Pancreas (tissue), 10 donors: ENCODE measurements at regions of chr3 and their contacts with region 1.

Region 1: GRCh38 chr3:149114458-149114857 is 15.0 kb upstream of the HPS3 start:
- DNase-seq: no peak
- ATAC-seq: no peak
- H3K4me3 ChIP-seq: no peak overlapping the region
- H3K27ac ChIP-seq: no peak overlapping the region
- H3K4me1 ChIP-seq: no peaks in the 10 kb centered on the region
- H3K27me3 ChIP-seq: no peaks in the 10 kb centered on the region
- CTCF ChIP-seq: no peak

Region 2: DNA sequence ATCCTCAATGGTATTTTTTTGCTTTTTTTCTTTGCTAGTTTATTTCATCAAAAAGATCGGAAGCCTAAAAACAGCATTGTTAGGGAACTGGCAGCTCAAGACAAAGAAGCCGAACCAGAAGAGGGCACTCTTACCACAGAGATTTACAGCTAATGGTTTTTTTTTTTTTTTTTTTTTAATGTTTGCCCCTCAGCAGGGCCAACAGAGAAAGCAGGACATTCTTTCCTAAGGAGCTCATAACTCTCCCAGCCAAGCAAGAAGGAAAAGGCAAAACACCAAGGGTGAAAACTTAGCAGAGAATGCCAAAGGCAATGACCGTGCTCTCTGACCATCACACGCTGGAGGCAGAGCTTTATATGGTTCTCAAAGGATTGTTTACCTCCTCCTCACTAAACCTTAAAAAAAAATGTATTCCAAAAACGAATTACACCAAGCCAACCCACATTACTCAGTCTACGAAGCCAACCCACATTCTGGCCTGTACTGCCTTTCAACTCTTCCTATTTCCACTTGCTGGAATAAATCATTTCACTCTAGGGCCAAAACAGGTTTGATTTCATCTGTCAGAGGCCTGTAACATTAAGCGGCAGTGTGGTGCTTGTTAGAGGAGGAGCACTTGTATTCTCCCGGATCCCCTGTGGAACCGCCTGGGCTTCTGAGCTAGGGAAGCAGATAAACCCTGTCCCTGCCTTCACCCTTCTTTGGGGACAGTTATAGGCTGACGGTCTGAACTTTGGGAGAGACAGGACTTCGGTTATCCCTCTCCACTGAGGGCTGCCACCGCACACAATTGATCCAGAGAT is 158.7 kb before region 1 on chr3:
- intact Hi-C with region 1: loop called in 1 of 3 experiments (anchors 10 kb)
- DNase-seq: peak in 3 of 6 donors; percentile 43 to 59 (median 52)
- ATAC-seq: peak; percentile 60 to 87 (median 82)
- H3K4me3 ChIP-seq: no peak overlapping the region
- H3K27ac ChIP-seq: no peak overlapping the region
- H3K4me1 ChIP-seq: peaks cover 0 to 6% (median 0%) of the 10 kb centered on the region in 3 donors
- H3K27me3 ChIP-seq: no peaks in the 10 kb centered on the region
- CTCF ChIP-seq: peak in 2 of 4 donors; percentile 26 to 31

Region 3: GRCh38 chr3:149163066-149163465 is 48.6 kb after region 1 on chr3:
- intact Hi-C with region 1: no loop called
- DNase-seq: no peak
- ATAC-seq: no peak
- H3K4me3 ChIP-seq: no peak overlapping the region
- H3K27ac ChIP-seq: no peak overlapping the region
- H3K4me1 ChIP-seq: no peaks in the 10 kb centered on the region
- H3K27me3 ChIP-seq: no peaks in the 10 kb centered on the region
- CTCF ChIP-seq: no peak

Region 4: DNA sequence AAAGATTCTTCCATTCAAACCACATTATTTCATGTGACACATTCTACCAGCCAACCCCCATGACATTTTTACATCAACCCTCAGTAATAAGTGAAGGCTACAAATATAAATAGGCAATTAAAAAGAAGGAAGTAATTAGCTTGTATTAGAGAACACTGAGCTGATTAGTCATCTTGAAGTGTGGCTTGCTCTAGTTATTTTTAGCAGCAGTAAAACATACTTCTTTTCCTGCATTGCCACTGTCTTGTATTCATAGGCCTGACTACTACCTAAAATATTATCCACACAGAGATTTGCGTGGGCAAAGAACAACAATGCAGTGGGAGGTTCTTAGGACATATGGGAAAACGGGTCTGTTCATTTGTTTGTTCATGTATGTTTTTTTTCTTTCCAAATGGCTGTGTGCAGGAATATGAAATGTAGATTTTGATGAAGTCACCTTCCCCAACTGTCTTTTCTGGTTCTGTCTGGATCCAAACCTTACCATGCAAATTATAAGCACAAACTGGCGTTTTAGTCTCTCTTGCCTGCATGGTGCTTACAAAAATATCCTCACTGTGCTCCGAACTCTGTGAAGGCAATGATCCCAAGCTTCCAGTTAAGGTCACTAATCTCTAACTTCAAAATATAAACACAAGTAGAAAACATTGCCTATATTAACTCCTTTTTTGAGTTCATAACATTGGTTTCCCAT is 328.5 kb after region 1 on chr3:
- intact Hi-C with region 1: no loop called
- DNase-seq: no peak
- ATAC-seq: peak; percentile 51 to 87 (median 70)
- H3K4me3 ChIP-seq: no peak overlapping the region
- H3K27ac ChIP-seq: peak overlapping the region in 2 of 4 donors; percentile 36 to 37
- H3K4me1 ChIP-seq: peaks cover 0 to 17% (median 12%) of the 10 kb centered on the region in 3 donors
- H3K27me3 ChIP-seq: no peaks in the 10 kb centered on the region
- CTCF ChIP-seq: no peak